Heart right ventricle (tissue), 16 donors: ENCODE measurements at regions of chr4 and their contacts with region 1.

Region 1: DNA sequence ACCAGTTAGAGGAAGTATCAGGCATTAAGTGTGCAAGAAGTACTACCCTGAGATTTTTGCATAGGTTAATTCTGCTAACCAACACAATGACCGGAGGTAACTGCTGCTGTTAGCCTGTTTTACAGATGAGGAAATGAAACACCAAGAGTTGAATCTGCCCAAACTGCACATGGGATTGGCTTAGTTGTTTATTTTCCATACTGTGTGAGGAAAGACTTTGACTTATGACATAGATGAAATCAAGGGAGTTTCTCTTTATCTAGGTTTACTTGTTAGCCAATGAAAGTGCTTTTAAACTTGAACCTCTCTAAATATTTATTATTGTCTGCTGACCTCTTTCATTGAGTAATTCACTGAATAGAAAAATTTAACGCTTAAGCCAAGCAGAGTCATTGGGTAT is 10.3 kb downstream of the GUCY1B1 start:
- DNase-seq: no peak
- ATAC-seq: no peak
- H3K4me3 ChIP-seq: no peak overlapping the region
- H3K27ac ChIP-seq: no peak overlapping the region
- H3K4me1 ChIP-seq: peaks cover 0 to 14% (median 7%) of the 10 kb centered on the region in 9 donors
- H3K27me3 ChIP-seq: no peaks in the 10 kb centered on the region
- CTCF ChIP-seq: no peak

Region 2: DNA sequence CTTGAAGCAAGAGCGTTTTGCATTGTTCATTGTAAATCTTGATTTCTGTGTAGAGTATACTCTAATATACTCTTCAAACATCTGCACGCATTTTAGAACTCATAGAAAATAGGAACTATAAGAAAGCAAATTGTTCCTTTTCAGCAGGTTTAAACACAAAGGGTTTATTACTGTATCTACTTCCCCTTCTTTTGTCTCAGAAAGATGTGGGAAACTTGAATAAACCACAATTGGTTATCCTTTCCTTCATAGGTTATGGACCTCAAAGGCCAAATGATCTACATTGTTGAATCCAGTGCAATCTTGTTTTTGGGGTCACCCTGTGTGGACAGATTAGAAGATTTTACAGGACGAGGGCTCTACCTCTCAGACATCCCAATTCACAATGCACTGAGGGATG is 56.2 kb before region 1 on chr4:
- intact Hi-C with region 1: loop called in 1 of 10 experiments (anchors 5 kb)
- DNase-seq: no peak
- ATAC-seq: no peak
- H3K4me3 ChIP-seq: no peak overlapping the region
- H3K27ac ChIP-seq: no peak overlapping the region
- H3K4me1 ChIP-seq: peaks cover 0 to 4% (median 0%) of the 10 kb centered on the region in 9 donors
- H3K27me3 ChIP-seq: no peaks in the 10 kb centered on the region
- CTCF ChIP-seq: no peak

Region 3: DNA sequence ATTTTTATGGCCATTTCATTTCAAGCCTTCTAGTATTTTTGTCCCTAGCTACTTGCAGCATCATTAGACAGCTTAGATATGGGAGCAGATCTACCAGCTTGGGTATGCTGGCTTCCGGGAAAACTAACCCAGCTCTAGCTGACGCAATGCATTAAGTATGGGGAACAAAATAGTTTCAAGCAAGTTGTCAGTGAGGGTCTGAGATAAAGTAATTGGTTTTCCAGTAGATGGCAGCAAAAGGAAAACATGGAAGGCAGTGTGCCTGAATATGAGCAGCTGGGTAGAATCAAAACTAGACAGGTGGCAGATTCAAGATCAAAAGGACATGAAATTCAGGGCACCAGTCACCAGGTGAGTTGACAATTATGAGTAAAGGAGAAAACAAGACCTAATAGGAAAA is 525.5 kb after region 1 on chr4:
- intact Hi-C with region 1: no loop called
- DNase-seq: no peak
- ATAC-seq: peak in 3 of 8 donors; percentile 42 to 80 (median 70)
- H3K4me3 ChIP-seq: no peak overlapping the region
- H3K27ac ChIP-seq: no peak overlapping the region
- H3K4me1 ChIP-seq: peaks cover 0 to 27% (median 7%) of the 10 kb centered on the region in 9 donors
- H3K27me3 ChIP-seq: no peaks in the 10 kb centered on the region
- CTCF ChIP-seq: peak in 6 of 9 donors; percentile 16 to 36 (median 22)